B cell (primary cell): ENCODE measurements at regions of chr7 and their contacts with region 1.

Region 1: GRCh38 chr7:129091484-129092002 is 36.6 kb upstream of the TNPO3 start:
- DNase-seq: peak; percentile 88
- ATAC-seq: peak; percentile 85
- H3K4me3 ChIP-seq: no peak overlapping the region
- H3K4me3 Mint-ChIP-seq: peak overlapping the region; percentile 47
- H3K27ac ChIP-seq: peak overlapping the region in 1 of 2 donors; percentile 58
- H3K27ac Mint-ChIP-seq: peak overlapping the region; percentile 82
- H3K4me1 ChIP-seq: peaks cover 31% of the 10 kb centered on the region in 2 donors
- H3K4me1 Mint-ChIP-seq: peaks cover 40% of the 10 kb centered on the region
- H3K27me3 ChIP-seq: no peaks in the 10 kb centered on the region
- H3K27me3 Mint-ChIP-seq: no peaks in the 10 kb centered on the region
- CTCF ChIP-seq: peak; percentile 97

Region 2: GRCh38 chr7:128841921-128842651 is 249.5 kb before region 1 on chr7:
- CTCF ChIA-PET with region 1: interaction called, 17 read pairs
- POLR2A ChIA-PET with region 1: no interaction called
- intact Hi-C with region 1: loop called (anchors 2 kb)
- DNase-seq: peak; percentile 74
- ATAC-seq: peak; percentile 61
- H3K4me3 ChIP-seq: no peak overlapping the region
- H3K4me3 Mint-ChIP-seq: no peak overlapping the region
- H3K27ac ChIP-seq: no peak overlapping the region
- H3K27ac Mint-ChIP-seq: no peak overlapping the region
- H3K4me1 ChIP-seq: peaks cover 0 to 11% of the 10 kb centered on the region in 2 donors
- H3K4me1 Mint-ChIP-seq: peaks cover 4% of the 10 kb centered on the region
- H3K27me3 ChIP-seq: no peaks in the 10 kb centered on the region
- H3K27me3 Mint-ChIP-seq: no peaks in the 10 kb centered on the region
- CTCF ChIP-seq: peak; percentile 81

Region 3: GRCh38 chr7:128909625-128910257 is 181.8 kb before region 1 on chr7:
- CTCF ChIA-PET with region 1: interaction called, 19 read pairs
- POLR2A ChIA-PET with region 1: no interaction called
- intact Hi-C with region 1: loop called (anchors 1 kb)
- DNase-seq: no peak
- ATAC-seq: no peak
- H3K4me3 ChIP-seq: no peak overlapping the region
- H3K4me3 Mint-ChIP-seq: peak overlapping the region; percentile 32
- H3K27ac ChIP-seq: no peak overlapping the region
- H3K27ac Mint-ChIP-seq: no peak overlapping the region
- H3K4me1 ChIP-seq: peaks cover 21 to 22% of the 10 kb centered on the region in 2 donors
- H3K4me1 Mint-ChIP-seq: peaks cover 20% of the 10 kb centered on the region
- H3K27me3 ChIP-seq: peaks cover 0 to 37% (median 16%) of the 10 kb centered on the region in 4 experiments
- H3K27me3 Mint-ChIP-seq: peaks cover 34% of the 10 kb centered on the region
- CTCF ChIP-seq: no peak

Region 4: DNA sequence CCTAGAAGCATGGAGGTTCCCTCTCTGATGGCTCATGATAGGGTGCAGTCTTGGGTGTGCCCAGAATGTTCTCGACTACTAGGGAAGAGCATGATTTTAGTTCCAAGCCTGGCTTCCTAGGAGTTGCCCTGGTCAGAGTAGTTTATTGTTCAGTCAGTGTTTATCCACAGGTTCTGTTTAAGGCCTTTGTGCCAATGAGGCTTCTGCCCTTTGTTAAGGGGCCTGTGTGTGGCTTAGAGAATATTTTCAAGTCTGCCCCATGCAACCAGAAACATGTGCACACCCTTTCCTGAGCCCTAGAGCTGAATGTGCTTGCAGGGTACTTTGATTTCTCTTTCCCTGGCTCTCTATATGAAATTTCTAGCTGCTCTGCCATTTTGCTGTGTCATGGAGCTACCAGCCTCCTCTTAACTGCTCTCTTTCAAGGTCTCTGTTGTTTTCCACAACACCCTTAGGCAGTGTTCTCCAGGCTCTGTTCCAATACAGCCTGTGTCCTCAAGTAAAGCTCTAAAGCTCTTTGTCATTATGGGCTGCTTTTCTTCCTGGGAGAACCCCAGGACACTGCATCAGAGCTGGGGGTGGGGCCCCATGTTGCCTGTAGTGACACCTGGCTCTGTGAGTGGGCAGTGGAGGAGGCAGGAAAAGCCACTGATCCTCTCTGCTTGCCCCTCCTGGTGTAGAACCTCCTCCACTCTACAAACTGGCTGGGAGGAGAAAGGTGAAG is 18.9 kb after region 1 on chr7:
- CTCF ChIA-PET with region 1: interaction called, 10 read pairs
- POLR2A ChIA-PET with region 1: no interaction called
- intact Hi-C with region 1: no loop called
- DNase-seq: no peak
- ATAC-seq: no peak
- H3K4me3 ChIP-seq: no peak overlapping the region
- H3K4me3 Mint-ChIP-seq: no peak overlapping the region
- H3K27ac ChIP-seq: no peak overlapping the region
- H3K27ac Mint-ChIP-seq: no peak overlapping the region
- H3K4me1 ChIP-seq: no peaks in the 10 kb centered on the region
- H3K4me1 Mint-ChIP-seq: no peaks in the 10 kb centered on the region
- H3K27me3 ChIP-seq: no peaks in the 10 kb centered on the region
- H3K27me3 Mint-ChIP-seq: no peaks in the 10 kb centered on the region
- CTCF ChIP-seq: no peak

Region 5: GRCh38 chr7:129144095-129144833 is 52.7 kb after region 1 on chr7 and contains the start of gene TSPAN33:
- CTCF ChIA-PET with region 1: interaction called, 43 read pairs
- POLR2A ChIA-PET with region 1: no interaction called
- intact Hi-C with region 1: loop called (anchors 2 kb)
- DNase-seq: peak; percentile 78
- ATAC-seq: peak; percentile 75
- H3K4me3 ChIP-seq: peak within 1 kb of the TSS; percentile 84 to 100 (median 92)
- H3K4me3 Mint-ChIP-seq: peak within 1 kb of the TSS; percentile 99
- H3K27ac ChIP-seq: peak within 1 kb of the TSS; percentile 81 to 97
- H3K27ac Mint-ChIP-seq: peak within 1 kb of the TSS; percentile 99
- H3K4me1 ChIP-seq: peaks cover 44 to 59% of the 10 kb centered on the region in 2 donors
- H3K4me1 Mint-ChIP-seq: peaks cover 59% of the 10 kb centered on the region
- H3K27me3 ChIP-seq: no peaks in the 10 kb centered on the region
- H3K27me3 Mint-ChIP-seq: no peaks in the 10 kb centered on the region
- CTCF ChIP-seq: no peak
- total RNA-seq, gene TSPAN33: 111 and 117 TPM in 2 replicates

Region 6: GRCh38 chr7:129169171-129169671 is 77.7 kb after region 1 on chr7:
- CTCF ChIA-PET with region 1: interaction called, 118 read pairs
- POLR2A ChIA-PET with region 1: no interaction called
- intact Hi-C with region 1: loop called (anchors 1 kb)
- DNase-seq: peak; percentile 65
- ATAC-seq: peak; percentile 74
- H3K4me3 ChIP-seq: peak overlapping the region; percentile 44 to 83 (median 64)
- H3K4me3 Mint-ChIP-seq: peak overlapping the region; percentile 92
- H3K27ac ChIP-seq: peak overlapping the region; percentile 67 to 73
- H3K27ac Mint-ChIP-seq: peak overlapping the region; percentile 94
- H3K4me1 ChIP-seq: peaks cover 24 to 30% of the 10 kb centered on the region in 2 donors
- H3K4me1 Mint-ChIP-seq: peaks cover 47% of the 10 kb centered on the region
- H3K27me3 ChIP-seq: no peaks in the 10 kb centered on the region
- H3K27me3 Mint-ChIP-seq: no peaks in the 10 kb centered on the region
- CTCF ChIP-seq: no peak

Region 7: DNA sequence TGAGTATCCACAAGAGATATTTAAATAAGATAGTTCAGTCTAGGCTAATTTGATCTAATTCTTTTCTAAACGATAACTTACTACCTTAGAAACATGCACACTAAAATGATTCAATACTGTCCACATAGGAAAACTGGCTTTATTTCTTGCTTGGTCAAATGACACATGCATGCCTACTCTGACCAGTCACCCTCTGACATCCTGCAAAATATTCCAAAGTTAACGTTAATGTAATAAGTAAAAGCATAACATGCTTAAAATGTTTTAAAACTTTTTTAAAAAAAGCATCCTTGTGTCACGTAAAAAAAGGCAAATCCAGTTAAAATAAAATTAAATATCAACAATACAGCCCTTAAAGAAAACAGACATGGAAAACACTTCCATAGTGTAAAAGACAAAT is 791.0 kb after region 1 on chr7:
- CTCF ChIA-PET with region 1: no interaction called
- POLR2A ChIA-PET with region 1: no interaction called
- intact Hi-C with region 1: no loop called
- DNase-seq: no peak
- ATAC-seq: no peak
- H3K4me3 ChIP-seq: no peak overlapping the region
- H3K4me3 Mint-ChIP-seq: no peak overlapping the region
- H3K27ac ChIP-seq: no peak overlapping the region
- H3K27ac Mint-ChIP-seq: no peak overlapping the region
- H3K4me1 ChIP-seq: peaks cover 0 to 5% of the 10 kb centered on the region in 2 donors
- H3K4me1 Mint-ChIP-seq: peaks cover 6% of the 10 kb centered on the region
- H3K27me3 ChIP-seq: no peaks in the 10 kb centered on the region
- H3K27me3 Mint-ChIP-seq: no peaks in the 10 kb centered on the region
- CTCF ChIP-seq: no peak